ENCODE measurements at regions of chr18 and their contacts with region 1.

Region 1: GRCh38 chr18:58565021-58565420 is 63.9 kb downstream of the ALPK2 start:
- H3K4me3 Mint-ChIP-seq: no peak overlapping the region
- H3K27ac Mint-ChIP-seq: peak overlapping the region; percentile 72
- H3K4me1 Mint-ChIP-seq: peaks cover 32% of the 10 kb centered on the region
- H3K27me3 Mint-ChIP-seq: peaks cover 1% of the 10 kb centered on the region

Region 2: GRCh38 chr18:58535340-58536201 is 29.4 kb before region 1 on chr18:
- intact Hi-C with region 1: loop called (anchors 1 kb)
- H3K4me3 Mint-ChIP-seq: no peak overlapping the region
- H3K27ac Mint-ChIP-seq: peak overlapping the region; percentile 80
- H3K4me1 Mint-ChIP-seq: peaks cover 52% of the 10 kb centered on the region
- H3K27me3 Mint-ChIP-seq: peaks cover 4% of the 10 kb centered on the region

Region 3: DNA sequence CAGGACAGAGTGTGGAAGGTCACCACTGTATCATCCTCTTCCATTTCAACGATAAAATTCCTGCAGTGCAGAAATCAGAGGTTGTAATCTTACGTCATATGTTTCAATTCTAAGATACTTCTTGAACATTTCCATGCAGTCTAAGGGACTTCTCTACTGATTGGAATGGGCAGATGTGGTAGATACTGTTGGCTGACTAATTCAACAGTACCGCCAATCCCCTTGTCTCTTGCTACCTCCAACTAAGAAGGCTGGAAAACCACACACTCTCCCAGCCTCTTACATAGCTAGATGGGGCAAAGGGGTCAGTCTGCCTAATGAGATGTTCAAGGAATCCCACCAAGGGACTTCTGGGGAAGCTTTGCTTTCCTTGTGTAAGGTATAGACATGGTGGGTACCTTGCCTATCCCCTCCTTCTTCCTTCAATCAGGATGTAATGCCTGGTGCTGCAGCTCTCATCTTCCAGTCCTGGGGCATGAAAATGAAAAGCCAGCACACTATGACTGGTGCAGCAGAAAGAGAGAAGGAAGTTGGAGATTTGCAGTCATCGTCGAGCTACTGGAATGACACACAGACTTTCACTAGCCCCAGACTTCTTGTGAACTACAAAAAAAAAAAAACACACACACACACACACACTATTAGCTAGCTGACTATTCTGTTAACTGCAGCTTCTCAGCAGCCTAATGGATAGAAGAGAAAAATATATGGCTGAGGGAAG is 20.2 kb before region 1 on chr18:
- intact Hi-C with region 1: loop called (anchors 1 kb)
- H3K4me3 Mint-ChIP-seq: peak overlapping the region; percentile 49
- H3K27ac Mint-ChIP-seq: peak overlapping the region; percentile 87
- H3K4me1 Mint-ChIP-seq: peaks cover 66% of the 10 kb centered on the region
- H3K27me3 Mint-ChIP-seq: peaks cover 11% of the 10 kb centered on the region

Measured in dendritic cell treated with granulocyte-macrophage colony-stimulating factor and Interleukin-4, amounts not matched to agents 40 ng/mL and 50 ng/mL, for 4 days (primary cell).